Activated B cell treated with CpG ODN at 0.5 μM for 24 hours (primary cell): ENCODE measurements at regions of chr9 and their contacts with region 1.

Region 1: DNA sequence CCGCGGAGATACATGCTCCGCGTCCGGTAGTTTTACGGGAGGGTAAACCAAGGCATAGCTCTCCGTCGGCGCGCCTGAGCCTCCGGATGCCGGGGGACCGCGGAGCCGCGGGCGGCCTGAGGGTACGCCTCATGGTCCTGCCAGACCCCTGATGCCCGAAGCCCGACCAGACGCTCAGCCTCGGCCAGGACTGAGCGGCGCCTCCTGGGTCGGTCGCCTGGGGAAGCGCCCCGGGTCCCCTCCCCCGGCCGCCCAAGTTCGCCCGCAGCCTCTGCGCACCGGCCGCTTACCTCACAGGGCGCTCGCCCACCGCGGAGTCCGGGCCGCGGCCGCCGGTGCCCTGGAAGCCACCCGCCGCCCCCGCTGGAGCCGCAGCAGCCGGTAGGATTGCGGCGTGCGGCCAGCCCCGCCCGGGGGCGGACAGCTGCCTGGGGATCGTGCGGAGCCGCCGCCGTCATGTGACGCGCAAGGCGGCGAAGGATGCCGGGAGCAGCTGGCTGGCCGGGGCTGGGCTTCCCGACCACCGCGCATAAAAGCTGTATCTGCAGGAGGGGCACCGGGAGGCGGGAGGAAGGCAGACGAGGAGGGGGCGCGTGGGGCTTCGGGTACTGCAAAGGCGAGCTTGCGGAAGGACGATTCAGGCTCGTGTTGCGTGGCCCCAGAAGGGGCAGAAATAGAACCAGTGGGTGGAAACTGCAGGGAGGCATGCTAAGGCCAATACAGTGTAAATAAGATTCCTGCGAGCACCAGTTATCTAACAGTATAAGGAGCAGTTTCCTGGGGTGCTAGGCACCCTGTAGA is at the start of gene FBXO10:
- DNase-seq: peak; percentile 65
- ATAC-seq: peak; percentile 72
- H3K4me3 Mint-ChIP-seq: peak within 1 kb of the TSS; percentile 92
- H3K27ac Mint-ChIP-seq: peak within 1 kb of the TSS; percentile 89
- H3K4me1 Mint-ChIP-seq: peaks cover 47% of the 10 kb centered on the region
- H3K27me3 Mint-ChIP-seq: no peaks in the 10 kb centered on the region
- CTCF ChIP-seq: no peak
- total RNA-seq, gene FBXO10: 29.8 and 39.4 TPM in 2 replicates

Region 2: DNA sequence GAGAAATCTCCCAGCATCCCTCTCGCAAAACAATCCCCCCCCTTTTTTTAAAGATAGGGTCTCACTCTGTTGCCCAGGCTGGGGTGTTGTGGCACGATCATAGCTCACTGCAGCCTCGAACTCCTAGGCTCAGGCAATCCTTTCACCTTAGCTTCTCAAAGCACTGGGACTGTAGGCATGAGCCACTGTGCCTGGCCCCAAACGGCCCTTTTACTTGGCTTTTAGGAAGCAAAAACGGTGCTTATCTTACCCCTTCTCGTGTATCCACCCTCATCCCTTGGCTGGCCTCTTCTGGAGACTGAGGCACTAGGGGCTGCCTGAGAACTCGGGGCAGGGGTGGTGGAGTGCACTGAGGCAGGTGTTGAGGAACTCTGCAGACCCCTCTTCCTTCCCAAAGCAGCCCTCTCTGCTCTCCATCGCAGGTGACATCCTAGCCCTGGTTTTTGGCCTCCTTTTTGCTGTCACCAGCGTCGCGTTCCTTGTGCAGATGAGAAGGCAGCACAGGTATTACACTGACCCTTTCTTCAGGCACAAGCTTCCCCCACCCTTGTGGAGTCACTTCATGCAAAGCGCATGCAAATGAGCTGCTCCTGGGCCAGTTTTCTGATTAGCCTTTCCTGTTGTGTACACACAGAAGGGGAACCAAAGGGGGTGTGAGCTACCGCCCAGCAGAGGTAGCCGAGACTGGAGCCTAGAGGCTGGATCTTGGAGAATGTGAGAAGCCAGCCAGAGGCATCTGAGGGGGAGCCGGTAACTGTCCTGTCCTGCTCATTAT is 1895.6 kb before region 1 on chr9:
- CTCF ChIA-PET with region 1: no interaction called
- POLR2A ChIA-PET with region 1: no interaction called
- intact Hi-C with region 1: no loop called
- DNase-seq: no peak
- ATAC-seq: peak; percentile 66
- H3K4me3 Mint-ChIP-seq: peak overlapping the region; percentile 33
- H3K27ac Mint-ChIP-seq: peak overlapping the region; percentile 46
- H3K4me1 Mint-ChIP-seq: peaks cover 28% of the 10 kb centered on the region
- H3K27me3 Mint-ChIP-seq: peaks cover 5% of the 10 kb centered on the region
- CTCF ChIP-seq: no peak

Region 3: DNA sequence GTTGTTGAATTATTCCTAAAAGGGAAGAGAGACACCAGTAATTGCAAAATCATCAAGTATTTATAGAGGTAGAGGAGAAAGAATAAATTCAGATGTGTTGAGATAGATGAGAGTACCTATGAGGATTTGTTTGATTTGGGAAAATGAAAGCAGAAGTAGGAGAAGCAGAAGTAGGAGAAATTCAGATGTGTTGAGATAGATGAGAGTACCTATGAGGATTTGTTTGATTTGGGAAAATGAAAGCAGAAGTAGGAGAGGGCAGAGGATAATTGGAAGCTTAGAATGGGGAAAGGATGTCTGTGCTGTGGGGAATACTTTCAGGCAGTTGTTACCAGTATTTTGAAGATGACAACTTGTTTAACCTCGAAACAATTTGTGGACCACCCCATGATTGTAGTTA is 490.9 kb before region 1 on chr9:
- CTCF ChIA-PET with region 1: no interaction called
- POLR2A ChIA-PET with region 1: no interaction called
- intact Hi-C with region 1: no loop called
- DNase-seq: no peak
- ATAC-seq: peak; percentile 29
- H3K4me3 Mint-ChIP-seq: peak overlapping the region; percentile 21
- H3K27ac Mint-ChIP-seq: peak overlapping the region; percentile 41
- H3K4me1 Mint-ChIP-seq: peaks cover 81% of the 10 kb centered on the region
- H3K27me3 Mint-ChIP-seq: no peaks in the 10 kb centered on the region
- CTCF ChIP-seq: no peak

Region 4: DNA sequence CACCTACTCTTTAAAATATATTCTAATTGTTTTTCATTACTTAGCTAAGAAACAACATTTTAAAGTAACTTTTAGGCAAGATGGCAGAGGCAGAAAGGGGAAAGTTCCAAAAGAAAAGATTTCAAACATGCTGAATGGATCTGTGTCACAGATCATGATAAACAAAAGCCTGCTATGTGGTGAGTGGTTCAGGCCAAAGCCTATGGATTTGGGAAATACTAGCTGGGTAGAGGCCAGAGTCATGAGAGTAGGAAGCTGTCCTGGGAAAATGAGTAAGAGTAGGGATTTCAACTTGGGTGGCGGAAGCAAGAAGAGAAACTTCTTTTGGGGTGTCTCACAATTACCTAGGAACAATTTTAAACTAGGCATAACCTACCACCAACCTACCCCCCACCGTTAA is 222.3 kb before region 1 on chr9:
- CTCF ChIA-PET with region 1: no interaction called
- POLR2A ChIA-PET with region 1: no interaction called
- intact Hi-C with region 1: no loop called
- DNase-seq: no peak
- ATAC-seq: no peak
- H3K4me3 Mint-ChIP-seq: no peak overlapping the region
- H3K27ac Mint-ChIP-seq: peak overlapping the region; percentile 68
- H3K4me1 Mint-ChIP-seq: peaks cover 17% of the 10 kb centered on the region
- H3K27me3 Mint-ChIP-seq: no peaks in the 10 kb centered on the region
- CTCF ChIP-seq: no peak

Region 5: DNA sequence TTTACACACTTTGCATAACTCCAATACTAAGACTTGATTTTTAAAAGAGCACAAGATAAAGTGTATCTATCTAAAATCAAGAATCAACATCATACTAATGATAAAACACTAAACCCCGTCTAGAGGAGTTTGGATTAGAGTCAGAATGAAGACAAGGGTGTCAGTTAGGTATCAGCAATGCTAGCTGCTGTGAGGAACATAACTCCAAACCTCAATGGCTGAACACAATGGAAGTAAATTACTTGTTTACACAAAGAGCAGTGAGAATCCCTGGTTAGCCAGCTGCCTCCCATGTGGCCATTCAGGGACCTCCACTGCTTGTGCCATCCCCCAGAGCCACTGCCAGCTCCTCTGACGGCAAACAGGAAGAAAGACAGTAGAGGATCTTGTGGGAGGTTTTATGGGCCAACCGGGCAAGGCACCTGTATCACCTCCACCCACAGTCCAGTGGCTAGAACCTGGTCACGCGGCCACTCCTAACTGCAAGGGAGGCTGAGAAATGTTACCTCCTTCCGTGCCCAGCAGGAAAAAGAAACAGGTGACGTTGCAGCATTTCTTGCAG is 177.6 kb before region 1 on chr9:
- CTCF ChIA-PET with region 1: no interaction called
- POLR2A ChIA-PET with region 1: no interaction called
- intact Hi-C with region 1: no loop called
- DNase-seq: no peak
- ATAC-seq: no peak
- H3K4me3 Mint-ChIP-seq: peak overlapping the region; percentile 66
- H3K27ac Mint-ChIP-seq: peak overlapping the region; percentile 92
- H3K4me1 Mint-ChIP-seq: peaks cover 73% of the 10 kb centered on the region
- H3K27me3 Mint-ChIP-seq: no peaks in the 10 kb centered on the region
- CTCF ChIP-seq: no peak

Region 6: GRCh38 chr9:37465249-37466036 is 110.7 kb before region 1 on chr9 and contains the start of gene ZBTB5:
- CTCF ChIA-PET with region 1: no interaction called
- POLR2A ChIA-PET with region 1: interaction called, 11 read pairs
- intact Hi-C with region 1: no loop called
- DNase-seq: peak; percentile 93
- ATAC-seq: peak; percentile 76
- H3K4me3 Mint-ChIP-seq: peak within 1 kb of the TSS; percentile 98
- H3K27ac Mint-ChIP-seq: peak within 1 kb of the TSS; percentile 98
- H3K4me1 Mint-ChIP-seq: peaks cover 36% of the 10 kb centered on the region
- H3K27me3 Mint-ChIP-seq: no peaks in the 10 kb centered on the region
- CTCF ChIP-seq: no peak
- total RNA-seq, gene ZBTB5: 26.5 and 28.1 TPM in 2 replicates

Region 7: DNA sequence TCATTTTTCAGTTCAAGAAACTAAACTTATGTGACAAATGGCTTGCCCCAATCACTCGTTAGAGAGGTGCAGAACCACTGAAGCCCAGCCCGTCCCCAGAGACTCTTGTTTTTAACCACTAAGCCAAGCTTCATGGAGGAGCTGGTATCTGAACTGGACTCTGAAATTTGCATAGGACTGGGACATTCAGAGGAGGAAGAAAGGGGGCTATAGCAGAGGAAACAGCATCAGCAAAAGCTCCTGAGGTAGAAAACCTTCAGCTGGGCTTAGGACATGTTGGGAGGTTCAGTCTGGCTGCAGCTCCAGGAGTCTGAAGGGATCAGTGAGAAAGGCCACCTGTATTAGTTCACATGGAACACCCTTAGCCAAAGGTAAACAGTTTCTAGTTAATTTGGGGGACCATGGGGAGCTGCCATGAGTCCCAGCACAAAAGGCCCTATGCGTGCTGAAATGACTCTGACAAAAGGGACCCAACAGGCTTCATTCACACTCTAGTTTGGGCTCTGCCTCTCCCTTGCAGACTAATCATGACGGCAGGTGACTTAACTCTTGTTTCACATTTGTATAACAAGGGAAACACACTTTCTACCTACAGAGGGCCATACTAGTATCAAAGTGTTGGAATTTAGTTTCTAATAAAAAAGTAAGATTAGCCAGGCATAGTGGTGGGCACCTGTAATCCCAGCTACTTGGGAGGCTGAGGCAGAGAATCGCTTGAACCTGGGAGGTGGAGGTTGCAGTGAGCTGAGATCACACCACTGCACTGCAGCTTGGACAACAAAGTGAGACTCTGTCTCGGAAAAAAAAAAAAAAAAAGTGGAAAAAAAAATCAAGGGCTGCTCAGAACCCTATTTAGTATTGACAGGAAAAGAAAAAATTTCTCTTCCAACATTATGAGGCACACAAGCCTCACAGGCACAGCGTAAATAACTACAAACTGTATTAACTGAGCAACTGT is 10.2 kb before region 1 on chr9:
- CTCF ChIA-PET with region 1: interaction called, 3 read pairs
- POLR2A ChIA-PET with region 1: interaction called, 48 read pairs
- intact Hi-C with region 1: loop called (anchors 1 kb)
- DNase-seq: no peak
- ATAC-seq: peak; percentile 87
- H3K4me3 Mint-ChIP-seq: peak overlapping the region; percentile 78
- H3K27ac Mint-ChIP-seq: peak overlapping the region; percentile 92
- H3K4me1 Mint-ChIP-seq: peaks cover 82% of the 10 kb centered on the region
- H3K27me3 Mint-ChIP-seq: no peaks in the 10 kb centered on the region
- CTCF ChIP-seq: no peak